ENCODE measurements at regions of chr3 and their contacts with region 1.

Region 1: GRCh38 chr3:46276502-46277099 is 34.3 kb downstream of the CCR3 start:
- DNase-seq: peak; percentile 67 to 76 (median 73)
- H3K4me3 ChIP-seq: no peak overlapping the region
- H3K27ac ChIP-seq: no peak overlapping the region
- H3K4me1 ChIP-seq: peaks cover 0 to 12% (median 3%) of the 10 kb centered on the region in 4 experiments
- H3K27me3 ChIP-seq: no peaks in the 10 kb centered on the region

Region 2: DNA sequence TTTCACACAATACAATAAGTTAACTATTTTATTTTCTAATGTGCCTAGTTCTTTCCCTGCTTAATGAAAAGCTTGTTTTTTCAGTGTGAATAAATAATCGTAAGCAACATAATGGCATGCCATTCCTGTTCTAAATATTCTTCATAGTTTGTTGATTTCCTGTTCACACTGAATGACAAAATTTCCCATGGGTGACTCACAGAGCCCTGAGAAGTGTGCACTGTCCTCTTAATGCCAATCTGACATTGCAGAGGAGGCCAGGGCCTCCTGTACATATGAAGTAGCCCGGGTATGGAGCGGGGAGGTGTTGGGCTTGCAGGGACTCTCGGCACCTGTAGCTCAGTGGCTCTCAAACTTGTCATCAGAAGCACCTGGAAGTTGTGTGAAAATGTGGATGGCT is 10.0 kb before region 1 on chr3:
- CTCF ChIA-PET with region 1: interaction called, 20 read pairs
- POLR2A ChIA-PET with region 1: no interaction called
- DNase-seq: no peak
- H3K4me3 ChIP-seq: no peak overlapping the region
- H3K27ac ChIP-seq: no peak overlapping the region
- H3K4me1 ChIP-seq: peaks cover 0 to 5% (median under 1%) of the 10 kb centered on the region in 4 experiments
- H3K27me3 ChIP-seq: no peaks in the 10 kb centered on the region